Activated B cell treated with CpG ODN at 0.5 μM for 24 hours (primary cell): ENCODE measurements at regions of chr14 and their contacts with region 1.

Region 1: GRCh38 chr14:52189330-52189729 is 78.2 kb upstream of the PTGDR start:
- DNase-seq: no peak
- ATAC-seq: no peak
- H3K4me3 Mint-ChIP-seq: no peak overlapping the region
- H3K27ac Mint-ChIP-seq: no peak overlapping the region
- H3K4me1 Mint-ChIP-seq: peaks cover 30% of the 10 kb centered on the region
- H3K27me3 Mint-ChIP-seq: no peaks in the 10 kb centered on the region
- CTCF ChIP-seq: no peak

Region 2: GRCh38 chr14:52175982-52176502 is 13.3 kb before region 1 on chr14:
- CTCF ChIA-PET with region 1: no interaction called
- POLR2A ChIA-PET with region 1: no interaction called
- intact Hi-C with region 1: loop called (anchors 1 kb)
- DNase-seq: peak; percentile 20
- ATAC-seq: peak; percentile 97
- H3K4me3 Mint-ChIP-seq: peak overlapping the region; percentile 65
- H3K27ac Mint-ChIP-seq: peak overlapping the region; percentile 67
- H3K4me1 Mint-ChIP-seq: peaks cover 41% of the 10 kb centered on the region
- H3K27me3 Mint-ChIP-seq: no peaks in the 10 kb centered on the region
- CTCF ChIP-seq: no peak